B cell (primary cell): ENCODE measurements at regions of chr14 and their contacts with region 1.

Region 1: GRCh38 chr14:77124345-77125280 is 17.0 kb downstream of the ZDHHC22 start:
- DNase-seq: peak; percentile 89
- ATAC-seq: peak; percentile 42
- H3K4me3 ChIP-seq: peak overlapping the region; percentile 32 to 79 (median 73)
- H3K4me3 Mint-ChIP-seq: peak overlapping the region; percentile 93
- H3K27ac ChIP-seq: peak overlapping the region; percentile 39 to 93
- H3K27ac Mint-ChIP-seq: peak overlapping the region; percentile 94
- H3K4me1 ChIP-seq: peaks cover 54 to 60% of the 10 kb centered on the region in 2 donors
- H3K4me1 Mint-ChIP-seq: peaks cover 59% of the 10 kb centered on the region
- H3K27me3 ChIP-seq: peaks cover 0 to 28% (median 4%) of the 10 kb centered on the region in 4 experiments
- H3K27me3 Mint-ChIP-seq: peaks cover 12% of the 10 kb centered on the region
- CTCF ChIP-seq: peak; percentile 78

Region 2: GRCh38 chr14:76812211-76813044 is 312.2 kb before region 1 on chr14 and contains the start of gene ANGEL1:
- CTCF ChIA-PET with region 1: no interaction called
- POLR2A ChIA-PET with region 1: no interaction called
- intact Hi-C with region 1: loop called (anchors 5 kb)
- DNase-seq: peak; percentile 99
- ATAC-seq: peak; percentile 95
- H3K4me3 ChIP-seq: peak within 1 kb of the TSS; percentile 31 to 79 (median 72)
- H3K4me3 Mint-ChIP-seq: peak within 1 kb of the TSS; percentile 90
- H3K27ac ChIP-seq: peak within 1 kb of the TSS; percentile 65 to 84
- H3K27ac Mint-ChIP-seq: peak within 1 kb of the TSS; percentile 99
- H3K4me1 ChIP-seq: peaks cover 20 to 25% of the 10 kb centered on the region in 2 donors
- H3K4me1 Mint-ChIP-seq: peaks cover 28% of the 10 kb centered on the region
- H3K27me3 ChIP-seq: peaks cover 0 to 5% (median 2%) of the 10 kb centered on the region in 4 experiments
- H3K27me3 Mint-ChIP-seq: no peaks in the 10 kb centered on the region
- CTCF ChIP-seq: no peak
- total RNA-seq, gene ANGEL1: 25.2 and 27.3 TPM in 2 replicates

Region 3: DNA sequence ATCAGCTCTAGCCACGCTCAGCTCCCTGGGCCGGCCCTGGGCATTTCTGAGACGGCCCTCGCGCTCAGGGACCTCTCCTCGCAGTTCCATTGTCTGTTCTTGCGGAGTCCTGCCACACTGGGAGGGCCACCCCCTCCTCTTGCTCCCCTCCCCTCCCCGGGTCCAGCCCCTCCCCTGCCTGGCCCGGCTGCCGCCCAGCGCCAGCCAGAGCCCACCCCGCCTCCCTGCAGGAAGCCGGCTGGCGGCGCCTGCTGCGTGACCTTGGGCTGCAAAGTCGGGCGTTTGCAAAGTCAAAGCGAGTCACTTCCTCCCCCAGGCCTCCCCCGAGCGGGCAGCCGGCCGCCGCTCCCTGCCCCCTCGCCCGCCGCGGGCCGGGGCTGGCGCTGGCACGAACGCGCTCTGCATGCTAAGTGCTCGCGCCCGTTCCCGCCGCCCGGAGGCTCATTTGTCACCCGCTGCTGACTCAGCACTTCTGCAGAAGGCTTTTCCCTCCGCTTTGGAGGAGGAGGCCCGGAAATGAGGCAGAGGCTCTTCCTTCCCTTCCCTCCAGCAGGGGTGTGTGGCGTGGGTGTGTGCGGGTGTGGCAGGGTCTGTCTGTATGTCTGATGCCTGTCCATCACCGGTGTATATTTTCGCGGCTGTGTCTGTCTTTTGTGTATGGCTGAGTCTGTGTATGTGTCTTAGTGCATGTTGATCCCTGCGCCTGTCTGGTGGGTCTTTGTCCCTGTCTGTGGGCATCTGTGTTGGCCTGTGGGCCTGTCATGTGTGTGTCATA is 168.1 kb before region 1 on chr14:
- CTCF ChIA-PET with region 1: interaction called, 3 read pairs
- POLR2A ChIA-PET with region 1: interaction called, 7 read pairs
- intact Hi-C with region 1: loop called (anchors 1 kb)
- DNase-seq: peak; percentile 87
- ATAC-seq: peak; percentile 70
- H3K4me3 ChIP-seq: peak overlapping the region; percentile 23 to 64 (median 59)
- H3K4me3 Mint-ChIP-seq: peak overlapping the region; percentile 95
- H3K27ac ChIP-seq: peak overlapping the region; percentile 89 to 94
- H3K27ac Mint-ChIP-seq: peak overlapping the region; percentile 99
- H3K4me1 ChIP-seq: peaks cover 50 to 75% of the 10 kb centered on the region in 2 donors
- H3K4me1 Mint-ChIP-seq: peaks cover 65% of the 10 kb centered on the region
- H3K27me3 ChIP-seq: no peaks in the 10 kb centered on the region
- H3K27me3 Mint-ChIP-seq: no peaks in the 10 kb centered on the region
- CTCF ChIP-seq: no peak

Region 4: DNA sequence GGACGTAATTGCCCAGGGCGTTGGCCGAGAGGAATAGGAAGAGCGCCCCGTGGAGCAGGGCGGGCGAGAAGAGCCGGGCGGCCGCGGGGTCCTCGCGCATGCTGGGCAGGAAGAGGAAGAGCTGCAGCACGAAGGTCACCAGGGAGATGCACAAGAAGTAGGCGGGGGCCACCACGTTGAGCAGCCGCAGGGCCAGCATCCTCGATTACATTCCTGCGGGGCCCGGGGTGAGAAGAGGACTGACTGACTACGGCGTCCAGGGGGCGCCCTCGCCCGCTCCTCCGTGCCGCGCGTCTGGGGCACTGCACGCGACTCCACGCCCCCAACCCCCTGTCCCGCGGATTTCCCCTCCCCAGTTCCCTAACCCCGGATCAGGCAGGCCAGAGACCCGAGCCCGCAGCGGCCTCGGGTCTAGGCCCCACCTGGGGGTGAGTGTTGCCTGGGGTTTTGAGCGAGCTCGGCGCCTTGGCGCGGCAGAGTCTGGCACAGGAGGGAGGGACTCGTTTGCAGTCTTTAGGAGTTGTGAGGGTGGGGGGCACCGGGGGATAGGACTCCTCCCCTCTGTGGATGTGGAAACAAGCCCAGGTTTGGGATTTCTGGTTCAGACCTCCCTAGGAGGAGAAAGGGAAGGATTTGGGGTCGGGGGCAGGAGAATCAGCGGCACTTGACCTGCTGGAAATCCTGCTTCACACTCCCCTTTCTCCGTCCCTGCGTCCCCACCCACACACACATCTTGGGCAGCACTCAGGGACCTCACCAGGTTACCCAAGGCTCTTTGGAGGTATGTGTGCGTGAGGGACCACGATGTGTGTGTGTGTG is 15.1 kb after region 1 on chr14:
- CTCF ChIA-PET with region 1: interaction called, 25 read pairs
- POLR2A ChIA-PET with region 1: interaction called, 3 read pairs
- intact Hi-C with region 1: no loop called
- DNase-seq: peak; percentile 74
- ATAC-seq: peak; percentile 69
- H3K4me3 ChIP-seq: peak overlapping the region in 3 of 5 experiments; percentile 3 to 41 (median 40)
- H3K4me3 Mint-ChIP-seq: peak overlapping the region; percentile 85
- H3K27ac ChIP-seq: no peak overlapping the region
- H3K27ac Mint-ChIP-seq: no peak overlapping the region
- H3K4me1 ChIP-seq: peaks cover 34 to 40% of the 10 kb centered on the region in 2 donors
- H3K4me1 Mint-ChIP-seq: peaks cover 26% of the 10 kb centered on the region
- H3K27me3 ChIP-seq: peaks cover 0 to 85% (median 59%) of the 10 kb centered on the region in 4 experiments
- H3K27me3 Mint-ChIP-seq: peaks cover 81% of the 10 kb centered on the region
- CTCF ChIP-seq: peak; percentile 72

Region 5: GRCh38 chr14:77320238-77320935 is 195.8 kb after region 1 on chr14 and contains the start of gene POMT2:
- CTCF ChIA-PET with region 1: interaction called, 12 read pairs
- POLR2A ChIA-PET with region 1: interaction called, 4 read pairs
- intact Hi-C with region 1: loop called (anchors 1 kb)
- DNase-seq: peak; percentile 96
- ATAC-seq: peak; percentile 56
- H3K4me3 ChIP-seq: peak within 1 kb of the TSS; percentile 59 to 99 (median 93)
- H3K4me3 Mint-ChIP-seq: peak within 1 kb of the TSS; percentile 100
- H3K27ac ChIP-seq: peak within 1 kb of the TSS; percentile 89 to 92
- H3K27ac Mint-ChIP-seq: peak within 1 kb of the TSS; percentile 100
- H3K4me1 ChIP-seq: peaks cover 10 to 16% of the 10 kb centered on the region in 2 donors
- H3K4me1 Mint-ChIP-seq: peaks cover 18% of the 10 kb centered on the region
- H3K27me3 ChIP-seq: no peaks in the 10 kb centered on the region
- H3K27me3 Mint-ChIP-seq: no peaks in the 10 kb centered on the region
- CTCF ChIP-seq: peak; percentile 43
- total RNA-seq, gene POMT2: 36.6 and 44.1 TPM in 2 replicates

Region 6: GRCh38 chr14:77707724-77708408 is 583.3 kb after region 1 on chr14 and contains the starts of genes ALKBH1 and SLIRP:
- CTCF ChIA-PET with region 1: no interaction called
- POLR2A ChIA-PET with region 1: no interaction called
- intact Hi-C with region 1: loop called (anchors 5 kb)
- DNase-seq: peak; percentile 91
- ATAC-seq: peak; percentile 97
- H3K4me3 ChIP-seq: peak within 1 kb of the TSS; percentile 82 to 98 (median 92)
- H3K4me3 Mint-ChIP-seq: peak within 1 kb of the TSS; percentile 94
- H3K27ac ChIP-seq: peak within 1 kb of the TSS in 1 of 2 donors; percentile 75
- H3K27ac Mint-ChIP-seq: peak within 1 kb of the TSS; percentile 91
- H3K4me1 ChIP-seq: peaks cover 22 to 32% of the 10 kb centered on the region in 2 donors
- H3K4me1 Mint-ChIP-seq: peaks cover 37% of the 10 kb centered on the region
- H3K27me3 ChIP-seq: no peaks in the 10 kb centered on the region
- H3K27me3 Mint-ChIP-seq: no peaks in the 10 kb centered on the region
- CTCF ChIP-seq: no peak
- total RNA-seq, gene ALKBH1: 19.0 and 21.8 TPM in 2 replicates
- total RNA-seq, gene SLIRP: 30.6 and 33.8 TPM in 2 replicates